Caco-2 (cell line): ENCODE measurements at regions of chr6 and their contacts with region 1.

Region 1: GRCh38 chr6:52233975-52234823 is 10.1 kb downstream of the IL17F start:
- DNase-seq: peak; percentile 60 to 63
- H3K4me3 ChIP-seq: no peak overlapping the region
- H3K4me3 Mint-ChIP-seq: no peak overlapping the region
- H3K27ac Mint-ChIP-seq: no peak overlapping the region
- H3K4me1 ChIP-seq: no peaks in the 10 kb centered on the region
- H3K4me1 Mint-ChIP-seq: no peaks in the 10 kb centered on the region
- H3K27me3 ChIP-seq: no peaks in the 10 kb centered on the region
- H3K27me3 Mint-ChIP-seq: peaks cover 4% of the 10 kb centered on the region
- CTCF ChIP-seq: peak; percentile 59 to 80

Region 2: DNA sequence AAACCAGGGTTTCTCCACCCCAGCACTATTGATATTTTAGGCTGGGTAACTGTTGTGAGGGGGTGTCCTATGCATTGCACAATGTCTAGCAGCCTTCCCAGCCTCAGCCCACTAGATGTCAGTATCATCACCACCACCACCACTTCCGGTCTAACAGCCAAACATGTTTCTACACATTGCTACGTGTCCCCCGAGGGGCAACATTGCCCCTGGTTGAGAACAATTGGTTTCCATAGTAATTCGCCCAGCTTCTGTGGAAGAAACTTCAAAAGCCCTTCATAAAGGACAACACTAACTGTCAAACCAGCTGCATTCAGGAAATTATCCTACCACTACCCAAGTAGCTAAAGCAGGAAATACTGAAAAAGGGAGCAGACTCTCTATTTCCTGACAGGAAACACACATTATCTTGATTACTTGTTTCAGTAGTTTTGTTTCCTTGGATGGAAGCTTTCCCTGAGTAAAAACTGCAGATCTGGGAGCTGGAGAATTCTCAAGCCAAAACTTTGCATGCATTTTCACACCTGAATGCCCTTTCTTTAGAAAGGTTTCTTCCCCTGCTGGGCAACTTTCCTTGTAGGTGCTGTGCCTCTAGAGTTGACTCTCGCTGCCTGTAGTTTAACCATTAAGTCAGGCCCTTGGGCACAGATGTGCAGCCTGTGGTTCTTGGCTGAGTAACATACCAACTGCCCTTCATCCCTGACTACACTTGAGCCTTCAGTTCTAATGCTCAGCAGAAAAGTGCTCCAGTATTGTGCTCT is 170.4 kb before region 1 on chr6:
- CTCF ChIA-PET with region 1: no interaction called
- POLR2A ChIA-PET with region 1: no interaction called
- intact Hi-C with region 1: loop called (anchors 1 kb)
- DNase-seq: peak; percentile 48 to 63
- H3K4me3 ChIP-seq: no peak overlapping the region
- H3K4me3 Mint-ChIP-seq: no peak overlapping the region
- H3K27ac Mint-ChIP-seq: peak overlapping the region; percentile 59
- H3K4me1 ChIP-seq: 0 out of 2 replicates have a peak, but pooled peaks cover 4% of the 10 kb centered on the region
- H3K4me1 Mint-ChIP-seq: peaks cover 7% of the 10 kb centered on the region
- H3K27me3 ChIP-seq: no peaks in the 10 kb centered on the region
- H3K27me3 Mint-ChIP-seq: no peaks in the 10 kb centered on the region
- CTCF ChIP-seq: peak; percentile 55 to 71

Region 3: DNA sequence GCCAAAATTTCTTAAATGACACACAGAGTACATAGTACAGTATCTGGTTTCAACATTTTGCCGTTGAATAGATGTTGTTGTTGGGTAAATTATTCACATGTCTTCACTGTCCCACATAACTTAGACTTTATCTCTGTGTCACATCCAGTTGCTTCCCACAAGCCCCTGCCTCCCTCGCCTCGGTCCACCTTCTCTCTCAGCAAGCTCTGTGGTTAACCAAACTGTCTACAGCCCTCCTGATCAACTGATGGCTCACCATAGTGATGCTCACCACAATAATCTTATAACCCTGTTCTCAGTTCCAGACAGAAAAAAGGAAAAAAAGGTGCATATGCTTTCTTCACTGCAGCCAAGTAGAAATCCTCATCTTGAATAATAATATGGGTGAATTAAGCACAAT is 12.9 kb before region 1 on chr6:
- CTCF ChIA-PET with region 1: no interaction called
- POLR2A ChIA-PET with region 1: no interaction called
- intact Hi-C with region 1: no loop called
- DNase-seq: no peak
- H3K4me3 ChIP-seq: no peak overlapping the region
- H3K4me3 Mint-ChIP-seq: no peak overlapping the region
- H3K27ac Mint-ChIP-seq: no peak overlapping the region
- H3K4me1 ChIP-seq: 0 out of 2 replicates have a peak, but pooled peaks cover 3% of the 10 kb centered on the region
- H3K4me1 Mint-ChIP-seq: peaks cover 6% of the 10 kb centered on the region
- H3K27me3 ChIP-seq: no peaks in the 10 kb centered on the region
- H3K27me3 Mint-ChIP-seq: peaks cover 19% of the 10 kb centered on the region
- CTCF ChIP-seq: no peak

Region 4: GRCh38 chr6:52263709-52264540 is 29.7 kb after region 1 on chr6:
- CTCF ChIA-PET with region 1: no interaction called
- POLR2A ChIA-PET with region 1: no interaction called
- intact Hi-C with region 1: loop called (anchors 1 kb)
- DNase-seq: peak; percentile 54 to 72
- H3K4me3 ChIP-seq: no peak overlapping the region
- H3K4me3 Mint-ChIP-seq: no peak overlapping the region
- H3K27ac Mint-ChIP-seq: no peak overlapping the region
- H3K4me1 ChIP-seq: no peaks in the 10 kb centered on the region
- H3K4me1 Mint-ChIP-seq: no peaks in the 10 kb centered on the region
- H3K27me3 ChIP-seq: no peaks in the 10 kb centered on the region
- H3K27me3 Mint-ChIP-seq: no peaks in the 10 kb centered on the region
- CTCF ChIP-seq: peak; percentile 83 to 91

Region 5: GRCh38 chr6:52577022-52577777 is 343.0 kb after region 1 on chr6 and contains the start of gene TRAM2:
- CTCF ChIA-PET with region 1: no interaction called
- POLR2A ChIA-PET with region 1: no interaction called
- intact Hi-C with region 1: no loop called
- DNase-seq: peak; percentile 87 to 93
- H3K4me3 ChIP-seq: peak within 1 kb of the TSS; percentile 80
- H3K4me3 Mint-ChIP-seq: peak within 1 kb of the TSS; percentile 81
- H3K27ac Mint-ChIP-seq: peak within 1 kb of the TSS; percentile 81
- H3K4me1 ChIP-seq: peaks cover 60% of the 10 kb centered on the region
- H3K4me1 Mint-ChIP-seq: peaks cover 48% of the 10 kb centered on the region
- H3K27me3 ChIP-seq: no peaks in the 10 kb centered on the region
- H3K27me3 Mint-ChIP-seq: no peaks in the 10 kb centered on the region
- CTCF ChIP-seq: no peak
- total RNA-seq, gene TRAM2: 63.8 and 71.6 TPM in 2 replicates